HAP-1 (cell line): ENCODE measurements at regions of chr11 and their contacts with region 1.

Region 1: GRCh38 chr11:19951558-19952115 is 208.6 kb downstream of the DBX1 start:
- DNase-seq: peak; percentile 15 to 50
- H3K4me3 ChIP-seq: no peak overlapping the region
- H3K4me1 ChIP-seq: peaks cover 10% of the 10 kb centered on the region
- H3K27me3 ChIP-seq: peaks cover 8% of the 10 kb centered on the region; the same call in 1 of the 2 replicates

Region 2: GRCh38 chr11:18972336-18972735 is 979.3 kb before region 1 on chr11:
- in situ Hi-C with region 1: no loop called
- DNase-seq: no peak
- H3K4me3 ChIP-seq: no peak overlapping the region
- H3K4me1 ChIP-seq: no peaks in the 10 kb centered on the region
- H3K27me3 ChIP-seq: peaks cover 5% of the 10 kb centered on the region

Region 3: GRCh38 chr11:19432370-19433061 is 519.1 kb before region 1 on chr11:
- in situ Hi-C with region 1: no loop called
- DNase-seq: no peak
- H3K4me3 ChIP-seq: no peak overlapping the region
- H3K4me1 ChIP-seq: no peaks in the 10 kb centered on the region; the same call in none of the 2 replicates
- H3K27me3 ChIP-seq: peaks cover 18% of the 10 kb centered on the region

Region 4: DNA sequence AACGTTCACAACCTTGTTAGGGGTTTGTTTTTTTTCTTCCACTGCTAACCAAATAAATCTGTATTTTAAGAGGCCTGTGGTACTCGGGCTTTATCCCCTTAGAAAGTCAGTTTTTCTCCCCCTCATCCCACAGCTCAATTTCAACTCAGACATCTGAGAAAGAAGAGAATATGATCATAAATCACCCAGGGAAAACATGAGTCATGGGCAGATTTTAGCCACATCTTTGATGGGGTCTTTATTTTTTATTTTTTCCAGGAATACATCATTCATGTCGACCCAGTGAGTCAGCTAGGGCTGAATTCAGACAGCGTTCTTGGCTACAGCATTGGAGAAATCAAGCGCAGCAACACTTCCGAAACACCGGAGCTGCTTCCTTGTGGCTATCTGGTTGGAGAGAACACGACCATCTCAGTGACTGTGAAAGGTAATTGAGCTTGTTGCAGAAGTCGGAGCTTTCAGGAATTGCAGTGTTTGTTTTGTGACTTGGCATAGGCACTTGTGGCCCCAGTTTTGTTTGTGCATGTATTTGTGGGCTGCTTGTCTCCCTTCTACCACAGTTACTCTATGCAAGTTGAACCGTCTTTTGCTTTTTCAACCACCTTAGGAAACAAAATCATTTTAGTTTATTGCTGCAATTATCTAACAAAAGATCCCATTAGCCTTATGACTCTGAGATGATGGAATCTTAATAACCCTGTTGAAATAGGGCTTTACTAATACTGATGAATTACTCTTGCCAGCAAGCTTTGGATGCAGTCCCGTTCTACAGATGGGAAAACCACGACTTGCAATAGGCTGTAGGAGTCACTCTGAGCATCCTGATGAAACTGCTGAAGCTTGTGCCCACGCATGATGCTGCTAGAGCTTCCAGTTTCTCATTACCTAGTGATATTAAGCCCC is 145.9 kb after region 1 on chr11:
- in situ Hi-C with region 1: loop called (anchors 10 kb)
- DNase-seq: no peak
- H3K4me3 ChIP-seq: no peak overlapping the region
- H3K4me1 ChIP-seq: no peaks in the 10 kb centered on the region
- H3K27me3 ChIP-seq: no peaks in the 10 kb centered on the region

Region 5: GRCh38 chr11:20127671-20128527 is 176.3 kb after region 1 on chr11:
- in situ Hi-C with region 1: loop called (anchors 5 kb)
- DNase-seq: peak; percentile 44 to 90
- H3K4me3 ChIP-seq: no peak overlapping the region
- H3K4me1 ChIP-seq: no peaks in the 10 kb centered on the region
- H3K27me3 ChIP-seq: 0 out of 2 replicates have a peak, but pooled peaks cover 6% of the 10 kb centered on the region

Region 6: DNA sequence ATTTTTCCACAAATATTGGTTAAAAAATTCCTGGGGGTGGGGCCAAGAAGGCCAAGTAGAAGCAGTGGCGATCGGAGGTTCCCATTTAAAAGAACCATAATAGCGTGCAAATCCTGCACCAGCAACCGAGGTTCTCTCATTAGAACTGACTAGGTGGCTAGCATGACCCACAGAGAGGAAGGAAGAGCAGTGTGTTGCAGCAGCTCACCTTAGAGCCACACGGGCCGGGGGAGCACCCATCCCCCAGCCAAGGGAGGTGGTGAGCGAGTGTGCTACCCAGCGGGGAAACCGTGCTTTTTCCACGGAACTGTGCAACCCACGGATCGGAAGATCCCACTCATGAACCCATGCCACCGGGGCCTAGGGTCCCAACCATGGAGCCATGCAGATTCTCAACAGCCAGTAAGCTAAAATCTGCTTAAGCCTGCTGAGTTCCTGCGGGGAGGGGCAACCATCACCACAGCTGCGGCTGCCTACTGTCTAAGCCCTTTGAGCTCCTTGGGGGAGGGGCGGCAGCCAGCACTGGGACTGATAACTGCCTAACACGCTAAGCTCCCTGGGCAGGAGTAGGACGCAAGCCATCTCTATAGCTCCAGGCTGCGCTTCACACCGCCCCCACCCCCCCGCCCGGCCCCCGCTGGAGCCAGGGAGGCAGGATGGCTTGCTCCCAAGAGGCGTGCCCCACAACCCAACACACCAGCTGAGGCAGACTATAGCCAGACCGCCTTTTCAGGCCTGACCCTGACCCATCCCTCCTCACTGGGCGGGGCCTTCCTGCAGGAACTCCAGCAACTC is 390.9 kb after region 1 on chr11:
- in situ Hi-C with region 1: loop called (anchors 10 kb)
- DNase-seq: peak in 1 of 2 experiments; percentile 52
- H3K4me3 ChIP-seq: no peak overlapping the region
- H3K4me1 ChIP-seq: no peaks in the 10 kb centered on the region
- H3K27me3 ChIP-seq: peaks cover 31% of the 10 kb centered on the region